ENCODE measurements at regions of chr11 and their contacts with region 1.

Region 1: GRCh38 chr11:59615637-59616395 is at the start of gene OSBP:
- DNase-seq: peak; percentile 92 to 100 (median 96)
- ATAC-seq: peak; percentile 73
- H3K4me3 ChIP-seq: peak within 1 kb of the TSS; percentile 86 to 96
- H3K4me3 Mint-ChIP-seq: peak within 1 kb of the TSS; percentile 87
- H3K27ac ChIP-seq: peak within 1 kb of the TSS; percentile 92 to 100
- H3K27ac Mint-ChIP-seq: peak within 1 kb of the TSS; percentile 97
- H3K4me1 ChIP-seq: peaks cover 41% of the 10 kb centered on the region
- H3K4me1 Mint-ChIP-seq: peaks cover 46% of the 10 kb centered on the region
- H3K27me3 ChIP-seq: no peaks in the 10 kb centered on the region
- H3K27me3 Mint-ChIP-seq: no peaks in the 10 kb centered on the region
- CTCF ChIP-seq: no peak
- total RNA-seq, gene OSBP: 66.0 to 66.3 TPM

Region 2: DNA sequence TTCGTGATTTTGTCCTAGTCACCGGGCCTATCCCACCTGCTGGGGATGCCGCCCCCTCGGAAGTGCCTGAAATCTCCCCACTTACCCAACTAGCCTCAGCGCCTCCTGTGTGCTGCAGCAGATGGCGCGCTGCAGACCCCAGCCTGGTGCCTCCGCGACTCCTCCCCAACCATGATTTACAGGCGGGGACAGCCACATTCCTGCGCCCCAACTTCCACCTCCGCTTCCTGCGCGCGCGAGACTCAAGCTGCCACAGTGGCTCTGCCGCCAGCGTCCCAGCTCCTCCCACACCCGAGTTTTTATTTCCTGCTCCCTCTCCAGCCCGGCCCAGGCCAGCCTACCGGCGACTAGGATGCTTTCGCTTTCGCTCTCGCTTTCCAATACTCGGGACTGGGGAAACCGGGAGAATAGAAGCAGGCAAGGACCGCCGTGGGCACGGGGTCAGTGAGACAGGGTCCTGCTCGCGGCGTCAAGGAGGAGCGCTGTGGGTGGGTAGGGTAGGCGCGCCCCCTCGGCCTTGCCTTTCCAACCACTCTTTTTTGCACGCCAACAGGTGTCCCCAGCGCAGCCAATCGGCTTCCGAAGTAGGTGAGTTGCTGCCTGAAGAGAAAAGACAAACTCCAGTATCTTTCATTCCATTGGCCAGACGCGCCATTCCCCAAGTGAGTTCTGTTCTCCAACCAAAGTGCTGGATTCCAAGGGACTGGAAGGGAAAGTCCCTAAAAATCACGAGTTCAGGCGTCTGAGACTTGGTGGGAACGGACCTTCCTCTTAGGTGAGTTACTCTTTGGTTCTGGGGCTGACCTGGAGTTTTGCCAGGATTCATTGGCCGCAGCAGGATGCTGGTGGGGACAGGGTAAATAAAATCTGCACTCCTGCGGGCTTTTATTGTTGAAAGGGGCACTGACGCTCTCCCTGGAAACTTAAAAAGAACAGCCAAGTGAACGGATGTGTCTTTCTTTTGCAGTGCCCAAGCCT is 473.0 kb before region 1 on chr11 and contains the start of gene FAM111A:
- CTCF ChIA-PET with region 1: no interaction called
- POLR2A ChIA-PET with region 1: no interaction called
- intact Hi-C with region 1: loop called in 1 of 2 experiments (anchors 1 kb)
- DNase-seq: peak; percentile 58 to 95 (median 87)
- ATAC-seq: peak; percentile 83
- H3K4me3 ChIP-seq: peak within 1 kb of the TSS; percentile 84 to 95
- H3K4me3 Mint-ChIP-seq: peak within 1 kb of the TSS; percentile 98
- H3K27ac ChIP-seq: peak within 1 kb of the TSS; percentile 81 to 95
- H3K27ac Mint-ChIP-seq: peak within 1 kb of the TSS; percentile 97
- H3K4me1 ChIP-seq: peaks cover 31% of the 10 kb centered on the region
- H3K4me1 Mint-ChIP-seq: peaks cover 54% of the 10 kb centered on the region
- H3K27me3 ChIP-seq: no peaks in the 10 kb centered on the region
- H3K27me3 Mint-ChIP-seq: no peaks in the 10 kb centered on the region
- CTCF ChIP-seq: peak; percentile 45
- total RNA-seq, gene FAM111A: 23.3 to 33.4 TPM

Region 3: DNA sequence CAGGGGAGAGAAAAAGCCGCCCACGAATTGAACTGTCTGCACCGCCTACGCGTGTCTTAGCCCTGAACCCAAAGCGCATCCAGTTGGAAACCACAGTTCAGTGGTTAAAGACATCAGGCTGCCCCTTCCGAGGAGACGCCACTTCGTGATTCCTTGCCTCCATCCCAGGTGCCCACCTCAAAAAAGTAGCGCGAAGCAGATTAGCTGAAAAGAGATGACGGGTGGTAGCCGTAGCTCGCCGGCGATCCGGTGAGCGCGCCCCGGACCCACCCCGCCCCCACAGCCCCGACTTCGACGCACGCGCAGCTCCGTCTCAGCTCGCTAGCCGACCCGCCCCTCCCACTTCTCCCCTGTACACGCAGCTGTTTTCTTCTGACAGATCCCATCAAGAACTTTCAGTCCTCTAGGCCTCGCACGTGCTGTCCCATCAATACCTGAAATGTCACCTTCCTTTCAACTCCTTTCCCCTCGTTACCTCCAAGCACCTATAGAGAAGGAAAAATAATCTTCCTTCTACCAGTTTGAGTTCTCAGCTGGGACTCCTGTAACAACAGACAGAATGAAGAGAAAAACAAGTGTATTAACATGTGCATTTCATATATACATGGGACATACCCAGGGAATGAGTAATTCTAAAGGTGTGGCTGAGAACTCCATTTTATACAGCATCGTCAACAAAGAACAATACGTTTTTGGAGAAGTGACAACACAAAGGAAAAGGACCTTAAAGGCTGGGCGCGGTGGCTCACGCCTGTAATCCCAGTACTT is 54.9 kb before region 1 on chr11:
- CTCF ChIA-PET with region 1: interaction called, 4 read pairs
- POLR2A ChIA-PET with region 1: interaction called, 25 read pairs
- intact Hi-C with region 1: loop called (anchors 2 kb)
- DNase-seq: peak; percentile 64 to 91 (median 82)
- ATAC-seq: peak; percentile 74
- H3K4me3 ChIP-seq: peak overlapping the region; percentile 73 to 80
- H3K4me3 Mint-ChIP-seq: peak overlapping the region; percentile 96
- H3K27ac ChIP-seq: peak overlapping the region; percentile 53 to 60
- H3K27ac Mint-ChIP-seq: peak overlapping the region; percentile 94
- H3K4me1 ChIP-seq: peaks cover 20% of the 10 kb centered on the region
- H3K4me1 Mint-ChIP-seq: peaks cover 35% of the 10 kb centered on the region
- H3K27me3 ChIP-seq: no peaks in the 10 kb centered on the region
- H3K27me3 Mint-ChIP-seq: no peaks in the 10 kb centered on the region
- CTCF ChIP-seq: no peak

Region 4: DNA sequence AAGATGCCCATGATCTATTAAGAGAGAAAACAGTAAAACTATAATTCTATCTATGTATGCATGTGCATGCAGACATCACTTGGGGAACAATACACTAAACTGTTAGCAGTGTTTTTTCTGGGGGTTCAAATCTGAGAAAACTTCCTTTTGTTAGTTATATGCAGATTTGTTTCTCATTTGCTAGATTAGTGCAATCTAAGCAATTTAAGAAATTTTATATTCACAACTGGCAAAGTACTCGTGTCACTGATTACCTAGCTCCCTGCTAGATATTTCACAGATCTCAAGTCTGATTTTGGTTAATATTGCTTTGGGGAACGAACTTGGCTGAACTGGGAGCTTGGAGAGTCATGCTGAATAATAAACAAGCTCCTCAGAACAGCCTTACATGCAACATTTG is 14.7 kb after region 1 on chr11:
- CTCF ChIA-PET with region 1: interaction called, 3 read pairs
- POLR2A ChIA-PET with region 1: interaction called, 11 read pairs
- intact Hi-C with region 1: no loop called
- DNase-seq: no peak
- ATAC-seq: no peak
- H3K4me3 ChIP-seq: no peak overlapping the region
- H3K4me3 Mint-ChIP-seq: no peak overlapping the region
- H3K27ac ChIP-seq: no peak overlapping the region
- H3K27ac Mint-ChIP-seq: no peak overlapping the region
- H3K4me1 ChIP-seq: no peaks in the 10 kb centered on the region
- H3K4me1 Mint-ChIP-seq: no peaks in the 10 kb centered on the region
- H3K27me3 ChIP-seq: no peaks in the 10 kb centered on the region
- H3K27me3 Mint-ChIP-seq: no peaks in the 10 kb centered on the region
- CTCF ChIP-seq: no peak

Region 5: DNA sequence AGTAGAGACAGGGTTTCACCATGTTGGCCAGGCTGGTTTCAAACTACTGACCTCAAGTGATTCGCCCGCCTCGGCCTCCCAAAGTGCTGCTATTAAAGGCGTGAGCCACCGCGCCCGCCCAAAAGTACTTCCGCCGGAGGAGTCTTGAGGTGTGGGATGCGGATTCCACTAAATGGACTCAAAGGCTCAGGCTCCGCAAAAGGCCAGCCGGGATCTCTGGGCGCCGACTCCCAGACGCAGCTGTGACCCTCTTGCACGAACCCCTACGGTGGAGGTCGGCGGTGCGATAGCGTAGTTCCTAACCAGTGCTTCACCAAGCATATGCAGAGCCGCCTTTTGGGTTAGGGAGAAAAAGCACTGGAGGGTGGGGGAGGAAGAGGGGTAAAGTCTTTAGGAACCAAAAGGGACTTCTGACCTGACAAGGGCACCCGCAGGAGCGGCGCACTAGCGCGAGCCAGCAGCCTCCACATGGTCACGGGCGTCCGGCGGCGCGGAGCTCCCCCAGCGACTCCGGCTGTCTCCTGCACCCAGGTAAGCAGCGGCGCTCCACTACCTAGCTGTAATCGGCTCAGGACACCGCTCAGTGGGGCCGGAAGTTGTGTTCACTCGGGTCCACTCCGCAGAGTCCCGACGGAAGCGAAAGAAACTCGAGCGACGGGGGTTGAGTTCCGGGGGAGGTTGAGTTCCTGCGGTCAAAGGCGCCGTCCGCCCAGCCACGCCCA is 194.5 kb after region 1 on chr11 and contains the start of gene MRPL16:
- CTCF ChIA-PET with region 1: no interaction called
- POLR2A ChIA-PET with region 1: no interaction called
- intact Hi-C with region 1: loop called (anchors 1 to 5 kb)
- DNase-seq: peak; percentile 81 to 95 (median 91)
- ATAC-seq: peak; percentile 99
- H3K4me3 ChIP-seq: peak within 1 kb of the TSS; percentile 97 to 99
- H3K4me3 Mint-ChIP-seq: peak within 1 kb of the TSS; percentile 91
- H3K27ac ChIP-seq: peak within 1 kb of the TSS; percentile 73 to 87
- H3K27ac Mint-ChIP-seq: peak within 1 kb of the TSS; percentile 89
- H3K4me1 ChIP-seq: peaks cover 18% of the 10 kb centered on the region
- H3K4me1 Mint-ChIP-seq: peaks cover 23% of the 10 kb centered on the region
- H3K27me3 ChIP-seq: no peaks in the 10 kb centered on the region
- H3K27me3 Mint-ChIP-seq: peaks cover 4% of the 10 kb centered on the region
- CTCF ChIP-seq: peak; percentile 35
- total RNA-seq, gene MRPL16: 26.5 to 27.8 TPM